ENCODE measurements at regions of chr12 and their contacts with region 1.

Region 1: DNA sequence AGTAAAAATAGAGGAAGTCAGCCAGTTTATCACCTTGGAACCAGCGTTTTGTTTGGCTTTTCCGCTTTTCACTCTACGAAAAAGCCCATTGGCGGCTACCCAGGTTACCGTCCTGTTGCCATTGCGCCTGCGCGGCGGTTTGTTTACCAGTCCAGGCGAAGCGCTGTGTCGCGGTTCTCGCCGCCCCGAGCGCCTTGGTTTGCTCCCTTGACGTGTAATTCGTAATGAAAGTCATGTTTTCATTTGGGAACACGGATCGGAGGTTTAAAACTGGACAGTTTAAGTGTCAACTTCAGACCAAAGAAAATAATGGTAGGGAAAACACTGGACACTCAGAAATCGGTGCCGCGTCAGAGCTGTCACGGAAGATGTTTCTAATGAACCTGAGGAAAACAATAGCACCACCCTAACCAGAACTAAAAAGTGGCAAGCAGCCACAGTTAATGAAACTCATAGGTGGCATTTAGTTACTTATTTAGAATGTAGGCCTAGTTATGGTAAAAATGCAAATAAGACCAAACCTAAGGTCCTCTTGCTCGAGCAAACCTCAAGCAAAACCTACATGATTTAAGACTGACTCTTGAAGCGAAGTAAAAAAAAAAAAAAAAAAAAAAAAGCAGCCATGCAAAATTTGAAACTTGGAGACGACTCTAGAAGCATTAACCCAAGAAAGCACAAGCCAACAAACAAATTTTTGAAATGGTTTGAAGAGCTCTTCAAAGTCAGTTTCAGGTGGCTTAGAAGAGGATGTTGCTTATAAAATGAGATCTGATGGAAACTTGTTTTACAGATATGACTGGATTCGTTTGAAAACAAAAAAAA is 790 bp upstream of the GPR19 start:
- DNase-seq: peak; percentile 93
- H3K4me3 ChIP-seq: peak overlapping the region; percentile 49 to 71 (median 55)
- H3K27ac ChIP-seq: peak overlapping the region; percentile 93 to 99 (median 95)
- H3K4me1 ChIP-seq: peaks cover 0 to 13% (median 3%) of the 10 kb centered on the region in 4 donors
- H3K27me3 ChIP-seq: no peaks in the 10 kb centered on the region
- CTCF ChIP-seq: no peak
- EP300 ChIP-seq: no peak
- POLR2A ChIP-seq: peak; percentile 87

Region 2: GRCh38 chr12:11108862-11109261 is 1587.9 kb before region 1 on chr12:
- in situ Hi-C with region 1: no loop called
- intact Hi-C with region 1: loop called (anchors 5 kb)
- DNase-seq: no peak
- H3K4me3 ChIP-seq: no peak overlapping the region
- H3K27ac ChIP-seq: no peak overlapping the region
- H3K4me1 ChIP-seq: no peaks in the 10 kb centered on the region
- H3K27me3 ChIP-seq: no peaks in the 10 kb centered on the region
- CTCF ChIP-seq: no peak
- EP300 ChIP-seq: no peak
- POLR2A ChIP-seq: no peak

Region 3: DNA sequence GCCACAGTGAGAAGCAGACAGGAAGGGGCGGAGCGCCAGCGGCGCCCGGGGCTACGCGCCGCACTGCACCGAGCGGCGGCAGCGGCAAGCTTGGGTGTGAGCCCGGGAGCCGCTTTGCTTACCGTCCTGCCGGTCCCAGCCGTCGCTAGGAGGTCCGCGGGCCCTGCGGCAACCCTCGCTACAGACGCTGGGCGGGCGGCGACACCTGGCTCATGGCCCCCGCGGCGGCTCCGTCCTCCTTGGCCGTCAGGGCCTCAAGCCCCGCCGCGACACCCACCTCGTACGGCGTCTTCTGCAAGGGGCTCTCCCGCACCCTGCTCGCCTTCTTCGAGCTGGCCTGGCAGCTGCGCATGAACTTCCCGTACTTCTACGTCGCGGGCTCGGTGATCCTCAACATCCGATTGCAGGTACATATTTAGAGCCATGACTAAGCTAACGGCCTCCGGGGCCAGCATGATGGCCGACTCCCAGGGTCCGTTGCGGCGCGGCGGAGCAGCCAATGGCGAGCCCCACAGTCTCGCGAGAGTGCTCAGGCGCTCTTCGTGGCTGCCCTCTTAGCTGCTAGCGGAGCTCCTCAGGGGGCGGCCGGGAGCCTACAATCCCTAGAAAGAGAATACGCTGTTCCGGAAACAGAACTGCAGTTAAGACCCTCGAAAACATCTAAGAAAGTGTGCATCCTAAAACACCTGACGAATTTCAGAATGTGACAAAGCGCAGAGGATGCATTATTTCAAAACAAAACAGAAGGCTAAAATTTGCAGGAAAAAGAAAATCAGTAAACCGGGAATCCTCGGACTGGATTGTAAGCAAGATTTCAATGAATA is 1525.4 kb before region 1 on chr12 and contains the start of gene SMIM10L1:
- in situ Hi-C with region 1: no loop called
- intact Hi-C with region 1: loop called (anchors 5 kb)
- DNase-seq: peak; percentile 93
- H3K4me3 ChIP-seq: peak within 1 kb of the TSS; percentile 70 to 92 (median 85)
- H3K27ac ChIP-seq: peak within 1 kb of the TSS; percentile 92 to 99 (median 96)
- H3K4me1 ChIP-seq: peaks cover 7 to 41% (median 12%) of the 10 kb centered on the region in 4 donors
- H3K27me3 ChIP-seq: no peaks in the 10 kb centered on the region
- CTCF ChIP-seq: peak in 1 of 5 experiments; percentile 1
- EP300 ChIP-seq: no peak
- POLR2A ChIP-seq: peak; percentile 73
- total RNA-seq, gene SMIM10L1: 5.2 to 17.2 (median 8.9) TPM

Region 4: DNA sequence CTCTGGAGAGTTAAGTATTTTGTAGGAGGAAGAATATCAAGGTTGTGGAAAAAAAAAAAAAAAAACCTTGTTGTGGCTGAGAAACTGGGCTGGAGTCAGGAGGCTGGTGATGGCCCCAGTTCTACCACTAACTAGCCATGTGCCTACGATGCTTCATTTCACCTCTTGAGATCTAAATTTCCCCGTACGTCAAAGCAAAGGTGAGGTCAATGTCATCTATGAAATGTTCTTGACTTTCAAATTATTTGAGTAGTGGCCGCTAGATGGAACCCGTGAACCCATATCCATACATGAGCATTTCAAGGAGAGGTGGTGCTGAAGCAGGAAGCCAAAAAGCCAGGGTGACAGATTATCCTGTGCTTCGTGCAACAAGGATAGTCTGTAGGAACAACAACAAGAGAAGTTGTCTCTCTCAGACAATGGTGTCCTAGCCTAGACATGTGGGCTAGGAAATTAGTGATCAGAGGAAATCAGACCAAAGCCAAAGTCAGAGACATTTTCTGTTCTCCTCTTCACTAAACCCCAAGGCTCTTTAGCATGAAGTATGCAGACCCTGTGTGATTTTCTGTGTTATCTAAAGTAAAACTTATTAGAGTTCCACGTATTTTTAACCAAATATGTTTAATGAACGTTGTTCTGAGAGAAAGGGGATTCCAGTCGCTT is 1142.8 kb before region 1 on chr12:
- in situ Hi-C with region 1: loop called in 1 of 4 experiments (anchors 25 kb)
- intact Hi-C with region 1: no loop called
- DNase-seq: peak; percentile 58
- H3K4me3 ChIP-seq: no peak overlapping the region
- H3K27ac ChIP-seq: no peak overlapping the region
- H3K4me1 ChIP-seq: peaks cover 7 to 32% (median 14%) of the 10 kb centered on the region in 4 donors
- H3K27me3 ChIP-seq: no peaks in the 10 kb centered on the region
- CTCF ChIP-seq: peak; percentile 50 to 69 (median 58)
- EP300 ChIP-seq: no peak
- POLR2A ChIP-seq: no peak

Region 5: GRCh38 chr12:12356886-12357718 is 339.7 kb before region 1 on chr12 and contains the start of gene BORCS5:
- in situ Hi-C with region 1: loop called in 1 of 4 experiments (anchors 25 kb)
- intact Hi-C with region 1: no loop called
- DNase-seq: peak; percentile 99
- H3K4me3 ChIP-seq: peak within 1 kb of the TSS; percentile 77 to 90 (median 82)
- H3K27ac ChIP-seq: peak within 1 kb of the TSS; percentile 98 to 99 (median 98)
- H3K4me1 ChIP-seq: peaks cover 0 to 28% (median 18%) of the 10 kb centered on the region in 4 donors
- H3K27me3 ChIP-seq: no peaks in the 10 kb centered on the region
- CTCF ChIP-seq: peak in 2 of 5 experiments; percentile 7 to 25
- EP300 ChIP-seq: peak; percentile 10
- POLR2A ChIP-seq: peak; percentile 99
- total RNA-seq, gene BORCS5: 8.5 to 52.7 (median 21.3) TPM

Region 6: GRCh38 chr12:12791756-12792369 is 95.1 kb after region 1 on chr12:
- in situ Hi-C with region 1: no loop called
- intact Hi-C with region 1: no loop called
- DNase-seq: no peak
- H3K4me3 ChIP-seq: no peak overlapping the region
- H3K27ac ChIP-seq: peak overlapping the region in 3 of 4 donors; percentile 12 to 38 (median 31)
- H3K4me1 ChIP-seq: peaks cover 7 to 48% (median 23%) of the 10 kb centered on the region in 4 donors
- H3K27me3 ChIP-seq: no peaks in the 10 kb centered on the region
- CTCF ChIP-seq: no peak
- EP300 ChIP-seq: no peak
- POLR2A ChIP-seq: no peak

Region 7: DNA sequence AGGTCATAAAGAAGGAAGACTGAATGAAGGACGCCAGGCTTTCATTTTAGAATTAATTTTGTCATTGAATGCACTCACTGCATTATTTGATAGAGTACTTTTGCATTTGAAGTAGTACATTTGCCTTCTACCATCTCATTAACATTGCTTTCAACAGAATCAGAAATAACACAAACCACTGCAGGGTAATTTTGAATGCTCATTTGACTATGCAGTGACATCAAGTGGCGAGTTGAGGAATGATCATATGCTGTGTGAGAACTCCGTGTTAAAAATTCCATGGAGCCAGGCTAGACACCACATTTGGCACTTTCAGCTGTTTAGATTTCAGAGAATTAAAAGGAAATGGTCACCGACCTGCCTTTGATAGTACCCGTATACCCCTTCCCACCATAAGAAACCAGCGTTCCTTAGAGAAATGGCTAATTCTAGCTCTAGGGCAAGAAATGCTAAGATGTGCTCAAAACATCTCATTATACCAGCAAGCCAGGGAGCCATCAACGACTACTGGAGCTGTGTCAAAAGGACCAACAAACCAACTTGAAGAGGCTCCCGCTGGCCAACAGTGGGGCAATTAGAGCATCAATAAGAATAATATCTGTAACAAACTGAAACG is 286.8 kb after region 1 on chr12:
- in situ Hi-C with region 1: no loop called
- intact Hi-C with region 1: no loop called
- DNase-seq: no peak
- H3K4me3 ChIP-seq: no peak overlapping the region
- H3K27ac ChIP-seq: peak overlapping the region in 1 of 4 donors; percentile 7
- H3K4me1 ChIP-seq: peaks cover 0 to 15% (median 3%) of the 10 kb centered on the region in 4 donors
- H3K27me3 ChIP-seq: no peaks in the 10 kb centered on the region
- CTCF ChIP-seq: peak; percentile 46 to 58 (median 51)
- EP300 ChIP-seq: no peak
- POLR2A ChIP-seq: no peak

Measured in transverse colon (tissue), 4 donors.